H1 (cell line): ENCODE measurements at regions of chr1 and their contacts with region 1.

Region 1: GRCh38 chr1:208093754-208094719 is 150.1 kb downstream of the PLXNA2 start:
- DNase-seq: peak; percentile 39 to 90
- H3K4me3 ChIP-seq: no peak overlapping the region
- H3K27ac ChIP-seq: no peak overlapping the region
- H3K4me1 ChIP-seq: peaks cover 1 to 7% (median 4%) of the 10 kb centered on the region in 4 experiments; a peak in 5 of 7 replicates
- H3K27me3 ChIP-seq: no peaks in the 10 kb centered on the region
- CTCF ChIP-seq: peak; percentile 88 to 94 (median 89)
- EP300 ChIP-seq: no peak
- POLR2A ChIP-seq: no peak
- RAD21 ChIP-seq: peak; percentile 76 to 85

Region 2: GRCh38 chr1:208029381-208030287 is 64.4 kb before region 1 on chr1:
- CTCF ChIA-PET with region 1: interaction called, 257 read pairs
- POLR2A ChIA-PET with region 1: no interaction called
- DNase-seq: no peak
- H3K4me3 ChIP-seq: no peak overlapping the region
- H3K27ac ChIP-seq: no peak overlapping the region
- H3K4me1 ChIP-seq: no peaks in the 10 kb centered on the region
- H3K27me3 ChIP-seq: no peaks in the 10 kb centered on the region
- CTCF ChIP-seq: no peak
- EP300 ChIP-seq: no peak
- POLR2A ChIP-seq: no peak
- RAD21 ChIP-seq: no peak

Region 3: DNA sequence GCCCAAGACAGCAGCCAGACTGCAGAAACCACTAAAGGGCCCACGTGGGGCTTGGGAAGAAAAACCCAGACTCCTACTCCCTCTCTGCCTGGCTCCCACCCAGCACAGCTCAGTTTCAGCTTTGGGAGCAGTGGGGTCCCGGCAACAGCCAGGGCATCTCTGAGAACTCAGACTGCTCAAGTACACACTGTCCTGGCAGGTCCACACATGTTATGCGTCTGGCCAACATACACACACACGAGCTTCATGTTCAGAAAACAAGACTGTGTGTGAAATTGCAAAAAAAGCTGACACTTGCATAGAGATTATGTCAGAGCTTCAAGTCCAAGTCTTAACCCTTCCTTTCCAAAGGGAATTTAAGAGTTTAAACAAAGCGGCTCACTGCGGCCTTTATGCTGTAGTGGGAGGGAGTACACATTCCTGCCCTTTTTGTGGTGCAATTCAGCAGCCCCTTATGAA is 46.5 kb before region 1 on chr1:
- CTCF ChIA-PET with region 1: interaction called, 34 read pairs
- POLR2A ChIA-PET with region 1: no interaction called
- DNase-seq: no peak
- H3K4me3 ChIP-seq: no peak overlapping the region
- H3K27ac ChIP-seq: no peak overlapping the region
- H3K4me1 ChIP-seq: peaks cover 0 to 5% (median 0%) of the 10 kb centered on the region in 4 experiments; a peak in 1 of 7 replicates
- H3K27me3 ChIP-seq: no peaks in the 10 kb centered on the region
- CTCF ChIP-seq: no peak
- EP300 ChIP-seq: no peak
- POLR2A ChIP-seq: no peak
- RAD21 ChIP-seq: no peak

Region 4: DNA sequence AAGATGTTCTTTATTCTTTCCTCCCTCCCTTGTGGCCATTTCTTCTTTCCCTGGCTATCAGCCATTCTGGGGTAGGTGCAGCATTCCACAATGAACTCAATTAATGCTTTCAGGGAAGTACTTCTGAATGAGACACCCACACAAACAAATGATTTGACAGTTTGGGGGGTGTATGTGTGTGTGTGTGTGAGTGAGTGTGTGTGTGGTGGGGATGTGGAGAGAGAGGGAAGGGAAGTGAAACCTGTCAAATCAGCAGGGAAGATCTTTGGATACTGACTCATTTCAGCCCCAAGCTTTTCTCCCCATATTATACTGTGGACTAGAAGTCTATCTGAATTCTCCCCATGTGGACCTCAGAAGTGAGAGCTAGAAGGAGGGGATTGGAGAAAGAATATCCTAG is 28.2 kb before region 1 on chr1:
- CTCF ChIA-PET with region 1: interaction called, 63 read pairs
- POLR2A ChIA-PET with region 1: no interaction called
- DNase-seq: no peak
- H3K4me3 ChIP-seq: no peak overlapping the region
- H3K27ac ChIP-seq: no peak overlapping the region
- H3K4me1 ChIP-seq: no peaks in the 10 kb centered on the region; a peak in 1 of 7 replicates
- H3K27me3 ChIP-seq: no peaks in the 10 kb centered on the region
- CTCF ChIP-seq: no peak
- EP300 ChIP-seq: no peak
- POLR2A ChIP-seq: no peak
- RAD21 ChIP-seq: no peak

Region 5: GRCh38 chr1:208110296-208110695 is 16.3 kb after region 1 on chr1:
- CTCF ChIA-PET with region 1: interaction called, 22 read pairs
- POLR2A ChIA-PET with region 1: no interaction called
- DNase-seq: no peak
- H3K4me3 ChIP-seq: no peak overlapping the region
- H3K27ac ChIP-seq: no peak overlapping the region
- H3K4me1 ChIP-seq: peaks cover 0 to 4% (median 0%) of the 10 kb centered on the region in 4 experiments; a peak in 3 of 7 replicates
- H3K27me3 ChIP-seq: no peaks in the 10 kb centered on the region
- CTCF ChIP-seq: no peak
- EP300 ChIP-seq: no peak
- POLR2A ChIP-seq: no peak
- RAD21 ChIP-seq: no peak

Region 6: GRCh38 chr1:208173749-208174148 is 79.7 kb after region 1 on chr1:
- CTCF ChIA-PET with region 1: no interaction called
- POLR2A ChIA-PET with region 1: no interaction called
- DNase-seq: no peak
- H3K4me3 ChIP-seq: no peak overlapping the region
- H3K27ac ChIP-seq: no peak overlapping the region
- H3K4me1 ChIP-seq: peaks cover 8 to 23% (median 13%) of the 10 kb centered on the region in 4 experiments
- H3K27me3 ChIP-seq: no peaks in the 10 kb centered on the region
- CTCF ChIP-seq: no peak
- EP300 ChIP-seq: no peak
- POLR2A ChIP-seq: no peak
- RAD21 ChIP-seq: no peak

Region 7: GRCh38 chr1:208204779-208205178 is 110.7 kb after region 1 on chr1:
- CTCF ChIA-PET with region 1: no interaction called
- POLR2A ChIA-PET with region 1: no interaction called
- DNase-seq: no peak
- H3K4me3 ChIP-seq: no peak overlapping the region
- H3K27ac ChIP-seq: no peak overlapping the region
- H3K4me1 ChIP-seq: no peaks in the 10 kb centered on the region; a peak in 1 of 7 replicates
- H3K27me3 ChIP-seq: no peaks in the 10 kb centered on the region
- CTCF ChIP-seq: no peak
- EP300 ChIP-seq: no peak
- POLR2A ChIP-seq: no peak
- RAD21 ChIP-seq: peak in 1 of 2 experiments; percentile 18; a peak in 2 of 4 replicates